Aorta (tissue), 5 donors: ENCODE measurements at regions of chr4 and their contacts with region 1.

Region 1: GRCh38 chr4:73251384-73251783 is 7.2 kb downstream of the ANKRD17 start:
- DNase-seq: no peak
- ATAC-seq: no peak
- H3K4me3 ChIP-seq: no peak overlapping the region
- H3K27ac ChIP-seq: no peak overlapping the region
- H3K4me1 ChIP-seq: peaks cover 0 to 10% of the 10 kb centered on the region in 2 donors
- H3K27me3 ChIP-seq: no peaks in the 10 kb centered on the region

Region 2: GRCh38 chr4:73142995-73143547 is 108.3 kb before region 1 on chr4:
- intact Hi-C with region 1: loop called (anchors 5 kb)
- DNase-seq: no peak
- ATAC-seq: no peak
- H3K4me3 ChIP-seq: no peak overlapping the region
- H3K27ac ChIP-seq: no peak overlapping the region
- H3K4me1 ChIP-seq: peaks cover 0 to 2% of the 10 kb centered on the region in 2 donors
- H3K27me3 ChIP-seq: no peaks in the 10 kb centered on the region